CD14-positive monocyte (primary cell): ENCODE measurements at regions of chr5 and their contacts with region 1.

Region 1: GRCh38 chr5:138464008-138464387 is 1.3 kb upstream of the EGR1 start:
- DNase-seq: peak; percentile 91 to 95 (median 94)
- H3K4me3 ChIP-seq: peak overlapping the region; percentile 76 to 87 (median 78)
- H3K4me3 Mint-ChIP-seq: peak overlapping the region; percentile 85 to 92
- H3K27ac ChIP-seq: peak overlapping the region; percentile 91 to 96
- H3K27ac Mint-ChIP-seq: peak overlapping the region; percentile 89 to 97 (median 93)
- H3K4me1 ChIP-seq: peaks cover 43 to 56% of the 10 kb centered on the region in 2 donors
- H3K4me1 Mint-ChIP-seq: peaks cover 40% of the 10 kb centered on the region
- H3K27me3 ChIP-seq: peaks cover 3 to 21% of the 10 kb centered on the region in 2 donors
- H3K27me3 Mint-ChIP-seq: peaks cover 20 to 28% (median 28%) of the 10 kb centered on the region in 3 donors
- CTCF ChIP-seq: peak; percentile 99

Region 2: GRCh38 chr5:138491669-138492559 is 27.9 kb after region 1 on chr5:
- intact Hi-C with region 1: loop called (anchors 2 kb)
- DNase-seq: peak; percentile 78 to 84 (median 81)
- H3K4me3 ChIP-seq: peak overlapping the region; percentile 17 to 78 (median 42)
- H3K4me3 Mint-ChIP-seq: peak overlapping the region; percentile 80 to 93
- H3K27ac ChIP-seq: no peak overlapping the region
- H3K27ac Mint-ChIP-seq: no peak overlapping the region
- H3K4me1 ChIP-seq: peaks cover 17 to 24% of the 10 kb centered on the region in 2 donors
- H3K4me1 Mint-ChIP-seq: peaks cover 20% of the 10 kb centered on the region
- H3K27me3 ChIP-seq: peaks cover 20 to 41% of the 10 kb centered on the region in 2 donors
- H3K27me3 Mint-ChIP-seq: peaks cover 39 to 45% (median 44%) of the 10 kb centered on the region in 3 donors
- CTCF ChIP-seq: no peak

Region 3: GRCh38 chr5:138542956-138543729 is 79.1 kb after region 1 on chr5 and contains the start of gene ETF1:
- intact Hi-C with region 1: loop called (anchors 2 to 10 kb)
- DNase-seq: peak; percentile 100
- H3K4me3 ChIP-seq: peak within 1 kb of the TSS; percentile 82 to 99 (median 98)
- H3K4me3 Mint-ChIP-seq: peak within 1 kb of the TSS; percentile 98 to 100
- H3K27ac ChIP-seq: peak within 1 kb of the TSS; percentile 96 to 100
- H3K27ac Mint-ChIP-seq: peak within 1 kb of the TSS; percentile 99 to 100 (median 100)
- H3K4me1 ChIP-seq: peaks cover 49 to 55% of the 10 kb centered on the region in 2 donors
- H3K4me1 Mint-ChIP-seq: peaks cover 61% of the 10 kb centered on the region
- H3K27me3 ChIP-seq: no peaks in the 10 kb centered on the region
- H3K27me3 Mint-ChIP-seq: no peaks in the 10 kb centered on the region
- CTCF ChIP-seq: no peak
- polyA plus RNA-seq, gene ETF1: 34.8 to 71.4 (median 61.6) TPM